Activated CD8-positive, alpha-beta T cell treated with anti-CD3 and anti-CD28 coated beads for 36 hours (primary cell): ENCODE measurements at regions of chr5 and their contacts with region 1.

Region 1: GRCh38 chr5:118791926-118792734 is 196.2 kb downstream of the DTWD2 start:
- DNase-seq: peak; percentile 34
- ATAC-seq: peak; percentile 80
- H3K4me3 Mint-ChIP-seq: no peak overlapping the region
- H3K27ac Mint-ChIP-seq: no peak overlapping the region
- H3K4me1 Mint-ChIP-seq: no peaks in the 10 kb centered on the region
- H3K27me3 Mint-ChIP-seq: peaks cover 2% of the 10 kb centered on the region
- CTCF ChIP-seq: peak; percentile 60

Region 2: GRCh38 chr5:118775799-118776499 is 16.2 kb before region 1 on chr5:
- CTCF ChIA-PET with region 1: interaction called, 13 read pairs
- POLR2A ChIA-PET with region 1: no interaction called
- intact Hi-C with region 1: no loop called
- DNase-seq: no peak
- ATAC-seq: no peak
- H3K4me3 Mint-ChIP-seq: no peak overlapping the region
- H3K27ac Mint-ChIP-seq: no peak overlapping the region
- H3K4me1 Mint-ChIP-seq: no peaks in the 10 kb centered on the region
- H3K27me3 Mint-ChIP-seq: peaks cover 3% of the 10 kb centered on the region
- CTCF ChIP-seq: no peak